Left colon (tissue), 2 donors: ENCODE measurements at regions of chr20 and their contacts with region 1.

Region 1: DNA sequence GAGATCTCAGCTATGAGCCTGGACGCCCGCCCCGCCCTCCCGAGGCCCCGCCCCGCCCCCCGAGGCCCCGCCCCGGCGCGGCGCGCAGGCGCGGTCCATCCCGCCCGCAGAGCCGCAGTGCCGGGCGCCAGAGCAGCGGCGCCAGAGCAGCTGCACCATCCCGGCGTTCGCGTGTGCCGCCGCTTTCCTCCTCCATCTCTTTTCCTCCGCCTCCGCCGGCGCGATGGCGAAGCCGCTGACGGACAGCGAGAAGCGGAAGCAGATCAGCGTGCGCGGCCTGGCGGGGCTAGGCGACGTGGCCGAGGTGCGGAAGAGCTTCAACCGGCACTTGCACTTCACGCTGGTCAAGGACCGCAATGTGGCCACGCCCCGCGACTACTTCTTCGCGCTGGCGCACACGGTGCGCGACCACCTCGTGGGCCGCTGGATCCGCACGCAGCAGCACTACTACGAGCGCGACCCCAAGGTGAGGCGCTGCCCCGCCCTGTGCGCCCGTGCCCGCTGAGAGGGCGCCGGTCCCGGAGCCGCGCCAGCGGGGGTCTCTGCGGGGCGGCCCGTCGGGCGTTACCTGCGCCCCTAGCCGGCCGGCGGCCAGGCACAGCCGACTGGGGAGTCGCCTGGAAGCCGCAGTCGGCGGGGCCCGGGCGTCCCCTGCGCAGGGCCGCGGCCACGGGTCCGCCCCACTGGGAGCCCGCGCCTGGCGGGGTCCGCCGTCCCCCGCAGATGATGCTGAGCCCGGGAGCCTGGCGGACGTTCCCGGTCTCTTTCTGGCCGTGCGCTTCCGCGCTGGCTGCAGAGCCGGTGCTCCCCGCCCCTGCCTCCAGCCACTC is at the start of gene PYGB:
- DNase-seq: peak; percentile 70 to 83
- ATAC-seq: peak; percentile 67
- total RNA-seq, gene PYGB: 275 to 329 TPM

Region 2: DNA sequence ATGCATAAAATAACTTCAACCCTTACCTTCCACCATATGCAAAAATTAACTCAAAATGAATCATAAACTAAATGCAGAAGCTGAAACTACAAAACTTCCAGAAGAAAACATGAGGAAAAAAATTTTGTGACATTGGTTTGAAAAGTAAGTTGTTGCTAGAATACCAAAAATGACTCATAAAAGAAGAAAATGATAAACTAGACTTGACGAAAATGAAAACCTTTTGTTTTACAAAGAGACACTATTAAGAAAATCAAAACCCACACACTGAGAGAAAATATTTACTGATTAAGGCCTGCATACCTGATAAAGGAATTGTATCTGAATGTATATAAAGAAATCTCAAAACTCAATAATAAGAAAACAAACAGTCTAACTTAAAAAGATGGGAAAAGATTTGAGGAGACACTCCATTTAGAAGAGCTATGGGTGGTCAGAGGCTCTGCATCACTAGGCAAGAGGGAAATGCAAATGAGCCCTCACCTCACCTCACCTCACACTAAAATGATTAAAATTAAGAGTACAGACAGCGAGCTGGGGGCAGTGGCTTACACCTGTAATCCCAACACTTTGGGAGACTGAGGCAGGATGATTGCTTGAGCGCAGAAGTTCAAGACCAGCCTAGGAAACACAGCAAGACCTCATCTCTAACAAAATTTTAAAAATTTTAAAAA is 396.7 kb before region 1 on chr20:
- intact Hi-C with region 1: no loop called
- DNase-seq: no peak
- ATAC-seq: no peak

Region 3: GRCh38 chr20:25039396-25040115 is 208.6 kb before region 1 on chr20:
- intact Hi-C with region 1: no loop called
- DNase-seq: peak; percentile 78 to 94
- ATAC-seq: peak; percentile 73

Region 4: GRCh38 chr20:25090492-25091429 is 157.4 kb before region 1 on chr20:
- intact Hi-C with region 1: no loop called
- DNase-seq: peak in 1 of 2 donors; percentile 49
- ATAC-seq: peak; percentile 78

Region 5: GRCh38 chr20:25126630-25127029 is 121.5 kb before region 1 on chr20:
- intact Hi-C with region 1: no loop called
- DNase-seq: no peak
- ATAC-seq: no peak

Region 6: GRCh38 chr20:25195014-25195961 is 52.9 kb before region 1 on chr20 and contains the start of gene ENTPD6:
- intact Hi-C with region 1: loop called in 1 of 2 experiments (anchors 5 kb)
- DNase-seq: peak; percentile 90 to 95
- ATAC-seq: peak; percentile 78
- total RNA-seq, gene ENTPD6: 135 to 157 TPM